ENCODE measurements at regions of chr22 and their contacts with region 1.

Region 1: DNA sequence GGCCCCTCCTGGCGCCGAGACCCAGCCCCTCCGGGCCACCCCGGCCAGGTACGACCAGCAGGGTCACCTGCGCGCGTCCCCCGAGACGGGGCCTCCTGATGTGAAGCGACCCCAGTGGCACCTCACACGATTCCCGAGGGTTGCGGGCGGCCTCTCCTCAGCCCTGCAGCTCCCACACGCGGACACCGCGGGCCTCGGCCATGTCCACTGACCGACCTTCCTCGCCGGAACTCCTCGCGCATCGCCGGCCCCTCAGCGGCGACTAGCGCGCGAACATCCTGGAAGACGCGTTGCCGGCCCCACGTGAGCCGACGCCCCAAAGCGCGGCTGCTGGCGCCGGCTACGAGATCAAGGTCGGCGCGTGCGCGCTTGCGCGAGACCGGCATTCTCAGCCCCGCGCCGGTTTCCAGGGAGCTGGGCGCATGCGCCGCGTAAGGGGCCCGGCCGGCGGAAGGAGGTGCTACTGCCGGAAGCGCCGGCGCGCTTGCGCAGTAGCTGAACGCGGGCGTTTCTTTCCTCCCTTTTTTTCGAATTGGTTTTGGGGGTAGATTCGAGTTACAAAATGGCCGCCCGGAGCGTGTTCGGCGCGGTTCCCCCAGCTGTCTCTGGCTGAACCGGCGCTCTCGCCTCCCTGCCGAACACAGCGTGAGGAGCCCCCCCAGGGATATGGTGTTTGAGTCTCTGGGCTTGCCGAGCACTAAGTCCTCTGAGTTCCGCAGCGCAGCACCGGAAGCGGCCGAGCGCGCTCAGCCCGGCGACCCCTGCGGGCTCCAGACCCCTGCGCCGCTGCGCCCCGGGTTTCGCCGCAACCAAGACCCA is at the start of gene NUP50:
- DNase-seq: peak; percentile 84 to 98 (median 90)

Region 2: GRCh38 chr22:45235101-45235777 is 71.6 kb after region 1 on chr22:
- intact Hi-C with region 1: loop called (anchors 10 kb)
- DNase-seq: peak in 4 of 10 donors; percentile 24 to 89 (median 75)